Activated B cell treated with CpG ODN at 0.5 μM for 24 hours (primary cell): ENCODE measurements at regions of chr1 and their contacts with region 1.

Region 1: DNA sequence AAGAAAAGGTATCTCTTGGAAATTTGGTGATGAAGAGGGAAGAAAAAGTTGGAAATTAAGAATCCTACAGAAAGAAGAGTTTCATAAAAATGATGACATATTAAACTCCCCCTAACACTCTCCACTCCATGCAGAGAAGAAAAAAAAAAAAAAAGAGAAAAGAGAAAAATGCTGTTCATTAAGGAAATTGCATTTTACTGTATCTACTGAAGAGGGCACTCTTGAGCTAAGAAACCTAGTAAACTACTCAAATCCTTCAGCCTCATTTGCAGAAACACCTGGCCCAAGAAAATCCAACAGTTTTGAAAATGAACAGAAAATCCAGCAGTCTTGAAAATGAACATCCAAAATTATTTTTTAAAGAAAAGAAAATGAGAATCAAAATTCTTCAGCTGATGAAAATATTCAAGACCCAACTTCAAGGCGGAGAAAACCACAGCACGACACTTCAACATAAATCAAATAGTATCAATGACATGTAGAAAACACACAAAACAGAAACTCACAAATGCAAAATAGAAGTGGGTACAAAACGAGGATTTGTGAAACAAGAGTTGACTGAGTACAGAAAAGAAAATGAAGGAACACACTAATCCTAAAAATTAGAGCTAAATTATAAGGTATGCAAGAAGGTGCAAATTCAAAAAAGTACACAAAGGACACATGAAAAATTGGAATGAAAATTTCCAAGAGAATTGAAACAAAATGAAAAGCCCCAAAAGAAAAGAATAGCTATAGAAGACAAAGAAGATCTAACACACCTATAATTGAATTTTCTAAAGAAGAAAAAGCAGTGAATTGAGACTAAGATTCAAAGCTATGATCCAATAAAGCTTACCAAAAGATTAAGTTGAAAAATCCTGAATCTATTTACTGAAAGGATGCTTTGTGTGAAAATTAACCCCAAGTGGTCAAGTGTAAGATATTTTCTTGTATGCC is 73.2 kb upstream of the DNAJC6 start:
- DNase-seq: no peak
- ATAC-seq: no peak
- H3K4me3 Mint-ChIP-seq: no peak overlapping the region
- H3K27ac Mint-ChIP-seq: no peak overlapping the region
- H3K4me1 Mint-ChIP-seq: no peaks in the 10 kb centered on the region
- H3K27me3 Mint-ChIP-seq: peaks cover 9% of the 10 kb centered on the region
- CTCF ChIP-seq: no peak

Region 2: DNA sequence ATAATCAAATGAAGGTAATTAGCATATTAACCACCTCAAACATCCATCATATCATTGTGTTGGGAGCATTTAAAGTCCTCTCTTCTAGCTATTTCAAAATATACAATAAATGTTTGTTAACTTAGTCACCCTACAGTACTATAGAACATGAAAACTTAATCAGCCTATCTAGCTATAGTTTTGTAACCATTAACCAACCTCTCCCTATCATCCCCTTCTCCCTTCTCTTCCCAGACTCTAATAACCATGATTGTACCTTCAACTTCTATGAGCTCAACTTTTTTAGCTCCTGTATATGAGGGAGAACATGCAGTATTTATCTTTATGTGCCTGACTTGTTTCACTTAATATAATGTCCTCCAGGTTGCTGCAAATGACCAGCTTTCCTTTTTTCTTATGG is 437.3 kb before region 1 on chr1:
- CTCF ChIA-PET with region 1: no interaction called
- POLR2A ChIA-PET with region 1: no interaction called
- intact Hi-C with region 1: no loop called
- DNase-seq: no peak
- ATAC-seq: no peak
- H3K4me3 Mint-ChIP-seq: no peak overlapping the region
- H3K27ac Mint-ChIP-seq: no peak overlapping the region
- H3K4me1 Mint-ChIP-seq: no peaks in the 10 kb centered on the region
- H3K27me3 Mint-ChIP-seq: no peaks in the 10 kb centered on the region
- CTCF ChIP-seq: no peak

Region 3: DNA sequence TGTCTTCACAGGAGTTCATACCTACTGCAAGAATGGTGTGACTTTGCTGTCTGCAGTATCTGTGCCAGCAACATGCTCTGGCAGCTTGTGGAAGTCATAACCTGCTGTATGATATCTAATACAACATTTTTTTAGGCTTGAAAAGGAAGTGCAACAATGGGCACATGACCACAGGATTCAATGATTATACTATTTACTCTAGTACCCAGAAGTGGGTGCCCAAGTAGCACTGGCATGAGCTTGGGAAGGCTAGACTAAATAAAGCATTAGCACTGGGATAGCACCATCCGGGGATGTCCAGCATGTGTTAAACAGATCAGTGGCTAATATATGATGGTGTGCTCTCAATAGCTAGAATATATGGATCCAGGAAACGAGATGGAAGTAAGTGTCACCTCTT is 458.0 kb after region 1 on chr1:
- CTCF ChIA-PET with region 1: no interaction called
- POLR2A ChIA-PET with region 1: no interaction called
- intact Hi-C with region 1: loop called (anchors 2 kb)
- DNase-seq: no peak
- ATAC-seq: no peak
- H3K4me3 Mint-ChIP-seq: no peak overlapping the region
- H3K27ac Mint-ChIP-seq: no peak overlapping the region
- H3K4me1 Mint-ChIP-seq: no peaks in the 10 kb centered on the region
- H3K27me3 Mint-ChIP-seq: peaks cover 2% of the 10 kb centered on the region
- CTCF ChIP-seq: no peak